CD4-positive, alpha-beta T cell (primary cell): ENCODE measurements at regions of chr19 and their contacts with region 1.

Region 1: DNA sequence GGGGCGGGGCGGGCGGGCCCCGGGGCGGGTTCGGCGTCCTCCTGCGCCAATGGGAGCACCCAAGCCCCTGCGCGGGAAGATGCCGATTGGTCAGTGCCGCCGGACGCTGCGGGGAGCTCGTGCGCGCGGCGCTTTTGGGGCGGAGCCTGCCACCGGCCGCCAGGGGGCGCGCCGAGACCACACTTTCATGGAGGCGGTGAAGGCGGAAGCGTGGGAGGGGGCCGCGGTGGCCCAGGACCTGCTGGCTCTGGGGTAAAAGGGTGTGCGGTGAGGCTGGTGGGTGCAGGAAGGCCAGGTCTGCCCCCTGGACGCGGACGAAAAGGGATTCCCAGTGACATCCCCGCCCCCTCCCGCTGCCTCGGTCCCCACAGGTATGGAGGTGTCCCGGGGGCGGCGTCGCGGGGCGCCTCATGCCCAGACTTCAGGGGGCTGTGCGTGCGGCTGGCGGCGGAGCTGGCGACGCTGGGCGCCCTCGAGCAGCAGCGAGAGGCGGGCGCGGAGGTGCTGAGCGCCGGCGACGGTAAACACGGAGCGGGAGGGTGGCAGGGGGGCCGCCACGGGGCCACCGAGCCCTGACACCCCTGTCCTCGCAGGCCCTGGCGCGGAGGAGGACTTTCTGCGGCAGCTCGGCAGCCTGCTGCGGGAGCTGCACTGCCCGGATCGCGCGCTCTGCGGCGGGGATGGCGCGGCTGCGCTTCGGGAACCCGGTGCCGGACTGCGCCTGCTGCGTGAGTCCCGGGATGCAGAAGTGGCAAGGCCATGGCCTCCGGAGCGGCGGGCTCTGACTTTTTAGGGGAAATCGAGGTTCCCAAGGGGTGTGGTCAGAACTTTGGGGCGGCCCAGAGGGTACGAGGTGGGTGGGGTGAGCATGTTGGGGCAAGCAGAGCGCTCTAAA is at the start of gene FAM98C:
- DNase-seq: peak; percentile 96 to 99 (median 98)
- ATAC-seq: peak; percentile 95
- H3K4me3 ChIP-seq: peak within 1 kb of the TSS; percentile 74
- H3K4me3 Mint-ChIP-seq: peak within 1 kb of the TSS; percentile 97
- H3K27ac ChIP-seq: peak within 1 kb of the TSS; percentile 75 to 81
- H3K27ac Mint-ChIP-seq: peak within 1 kb of the TSS; percentile 91
- H3K4me1 ChIP-seq: peaks cover 26% of the 10 kb centered on the region
- H3K4me1 Mint-ChIP-seq: peaks cover 16% of the 10 kb centered on the region
- H3K27me3 ChIP-seq: no peaks in the 10 kb centered on the region
- H3K27me3 Mint-ChIP-seq: no peaks in the 10 kb centered on the region
- CTCF ChIP-seq: peak; percentile 97
- total RNA-seq, gene FAM98C: 33.2 to 36.1 TPM

Region 2: GRCh38 chr19:38335949-38336637 is 67.1 kb before region 1 on chr19:
- CTCF ChIA-PET with region 1: interaction called, 9 read pairs
- POLR2A ChIA-PET with region 1: interaction called, 11 read pairs
- intact Hi-C with region 1: loop called (anchors 2 kb)
- DNase-seq: peak; percentile 85 to 97 (median 92)
- ATAC-seq: peak; percentile 63
- H3K4me3 ChIP-seq: peak overlapping the region; percentile 95
- H3K4me3 Mint-ChIP-seq: peak overlapping the region; percentile 93
- H3K27ac ChIP-seq: peak overlapping the region; percentile 84 to 97
- H3K27ac Mint-ChIP-seq: peak overlapping the region; percentile 96
- H3K4me1 ChIP-seq: peaks cover 27% of the 10 kb centered on the region
- H3K4me1 Mint-ChIP-seq: peaks cover 24% of the 10 kb centered on the region
- H3K27me3 ChIP-seq: no peaks in the 10 kb centered on the region
- H3K27me3 Mint-ChIP-seq: no peaks in the 10 kb centered on the region
- CTCF ChIP-seq: no peak

Region 3: GRCh38 chr19:38417544-38418506 is 14.6 kb after region 1 on chr19:
- CTCF ChIA-PET with region 1: interaction called, 5 read pairs
- POLR2A ChIA-PET with region 1: interaction called, 12 read pairs
- intact Hi-C with region 1: no loop called
- DNase-seq: peak in 13 of 14 experiments; percentile 12 to 82 (median 45)
- ATAC-seq: peak; percentile 71
- H3K4me3 ChIP-seq: peak overlapping the region; percentile 63
- H3K4me3 Mint-ChIP-seq: peak overlapping the region; percentile 83
- H3K27ac ChIP-seq: peak overlapping the region in 1 of 2 donors; percentile 34
- H3K27ac Mint-ChIP-seq: peak overlapping the region; percentile 52
- H3K4me1 ChIP-seq: peaks cover 18% of the 10 kb centered on the region
- H3K4me1 Mint-ChIP-seq: peaks cover 26% of the 10 kb centered on the region
- H3K27me3 ChIP-seq: no peaks in the 10 kb centered on the region
- H3K27me3 Mint-ChIP-seq: no peaks in the 10 kb centered on the region
- CTCF ChIP-seq: no peak

Region 4: DNA sequence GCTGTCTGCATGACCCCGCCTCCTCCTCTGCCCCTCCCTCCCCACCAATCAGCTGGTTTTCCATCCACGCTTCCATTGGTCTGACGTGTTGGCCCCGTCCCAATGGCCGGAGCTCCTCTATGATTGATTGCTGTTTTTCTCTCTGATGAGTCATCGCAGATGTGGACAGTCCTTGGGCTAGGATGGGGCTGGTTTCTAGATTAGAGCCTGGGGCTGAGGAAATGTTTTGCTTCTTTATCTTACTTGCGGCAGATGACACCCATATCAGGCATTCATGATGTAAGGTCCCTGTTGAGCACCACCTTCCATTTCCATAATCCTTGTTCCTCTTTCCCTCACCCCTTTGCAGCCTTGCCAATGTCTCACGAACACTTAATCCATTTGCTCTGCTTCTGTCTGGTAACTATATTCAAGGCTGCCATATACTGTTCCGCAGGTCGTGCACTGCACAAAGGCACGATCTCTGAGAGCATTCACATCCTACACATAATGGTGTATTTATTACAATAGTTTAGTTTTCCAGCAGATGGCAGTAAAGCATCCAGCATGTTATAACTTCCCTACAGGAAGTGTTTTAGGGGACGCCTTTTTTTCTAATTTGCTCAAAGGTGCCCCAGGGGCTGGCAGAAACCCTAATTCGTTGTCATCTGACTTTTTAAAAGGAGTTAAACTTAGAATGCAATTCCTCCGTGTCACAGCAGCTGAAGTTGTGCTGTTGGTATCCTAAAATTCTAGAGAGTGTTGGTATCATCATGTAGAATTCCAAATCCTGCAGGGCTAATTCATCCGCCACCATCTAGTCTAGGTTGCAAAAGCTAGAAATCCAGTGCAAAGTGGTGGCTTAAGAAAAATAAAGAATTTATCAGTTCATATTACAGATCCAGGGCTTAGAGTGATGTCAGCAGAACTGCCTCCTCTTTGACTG is 141.1 kb after region 1 on chr19:
- CTCF ChIA-PET with region 1: no interaction called
- POLR2A ChIA-PET with region 1: interaction called, 3 read pairs
- intact Hi-C with region 1: loop called in 1 of 2 experiments (anchors 10 kb)
- DNase-seq: peak in 5 of 14 experiments; percentile 12 to 85 (median 75)
- ATAC-seq: peak; percentile 92
- H3K4me3 ChIP-seq: no peak overlapping the region
- H3K4me3 Mint-ChIP-seq: no peak overlapping the region
- H3K27ac ChIP-seq: no peak overlapping the region
- H3K27ac Mint-ChIP-seq: peak overlapping the region; percentile 0
- H3K4me1 ChIP-seq: peaks cover 24% of the 10 kb centered on the region
- H3K4me1 Mint-ChIP-seq: peaks cover 24% of the 10 kb centered on the region
- H3K27me3 ChIP-seq: no peaks in the 10 kb centered on the region
- H3K27me3 Mint-ChIP-seq: no peaks in the 10 kb centered on the region
- CTCF ChIP-seq: peak; percentile 81

Region 5: DNA sequence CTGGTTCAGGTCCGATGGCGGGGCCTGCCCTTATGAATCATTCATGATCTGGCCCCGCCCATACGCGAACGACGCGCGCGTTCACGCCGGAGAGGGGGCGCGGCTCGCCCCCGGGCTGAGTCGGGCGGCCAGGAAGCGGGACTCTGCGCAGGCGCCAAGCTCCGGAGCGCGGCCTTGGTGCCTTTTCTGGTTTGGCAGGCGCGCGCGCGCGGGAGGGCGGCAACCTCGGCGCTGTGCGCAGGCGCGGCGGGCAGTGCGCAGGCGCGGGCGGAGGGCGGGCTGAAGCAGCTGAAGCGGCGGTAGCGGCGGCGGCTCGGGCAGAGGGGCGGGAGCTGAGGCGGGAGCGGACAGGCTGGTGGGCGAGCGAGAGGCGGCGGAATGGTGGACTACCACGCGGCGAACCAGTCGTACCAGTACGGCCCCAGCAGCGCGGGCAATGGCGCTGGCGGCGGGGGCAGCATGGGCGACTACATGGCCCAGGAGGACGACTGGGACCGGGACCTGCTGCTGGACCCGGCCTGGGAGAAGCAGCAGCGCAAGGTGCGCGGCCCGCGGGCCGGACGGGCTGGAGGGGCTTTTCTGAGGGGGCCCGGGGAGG is 244.3 kb after region 1 on chr19 and contains the start of gene ACTN4:
- CTCF ChIA-PET with region 1: interaction called, 7 read pairs
- POLR2A ChIA-PET with region 1: interaction called, 16 read pairs
- intact Hi-C with region 1: no loop called
- DNase-seq: peak; percentile 99 to 100 (median 100)
- ATAC-seq: peak; percentile 92
- H3K4me3 ChIP-seq: peak within 1 kb of the TSS; percentile 96
- H3K4me3 Mint-ChIP-seq: peak within 1 kb of the TSS; percentile 85
- H3K27ac ChIP-seq: peak within 1 kb of the TSS; percentile 21 to 41
- H3K27ac Mint-ChIP-seq: peak within 1 kb of the TSS; percentile 75
- H3K4me1 ChIP-seq: peaks cover 50% of the 10 kb centered on the region
- H3K4me1 Mint-ChIP-seq: peaks cover 37% of the 10 kb centered on the region
- H3K27me3 ChIP-seq: peaks cover 3 to 9% of the 10 kb centered on the region in 2 experiments
- H3K27me3 Mint-ChIP-seq: peaks cover 37% of the 10 kb centered on the region
- CTCF ChIP-seq: no peak
- total RNA-seq, gene ACTN4: 70.3 to 84.0 TPM

Region 6: GRCh38 chr19:38877781-38878574 is 474.8 kb after region 1 on chr19 and contains the start of gene RINL:
- CTCF ChIA-PET with region 1: interaction called, 4 read pairs
- POLR2A ChIA-PET with region 1: interaction called, 13 read pairs
- intact Hi-C with region 1: no loop called
- DNase-seq: peak; percentile 45 to 86 (median 73)
- ATAC-seq: peak; percentile 96
- H3K4me3 ChIP-seq: peak within 1 kb of the TSS; percentile 58
- H3K4me3 Mint-ChIP-seq: peak within 1 kb of the TSS; percentile 91
- H3K27ac ChIP-seq: peak within 1 kb of the TSS; percentile 90 to 96
- H3K27ac Mint-ChIP-seq: peak within 1 kb of the TSS; percentile 97
- H3K4me1 ChIP-seq: peaks cover 55% of the 10 kb centered on the region
- H3K4me1 Mint-ChIP-seq: peaks cover 38% of the 10 kb centered on the region
- H3K27me3 ChIP-seq: no peaks in the 10 kb centered on the region
- H3K27me3 Mint-ChIP-seq: no peaks in the 10 kb centered on the region
- CTCF ChIP-seq: no peak
- total RNA-seq, gene RINL: 19.5 to 21.3 TPM

Region 7: DNA sequence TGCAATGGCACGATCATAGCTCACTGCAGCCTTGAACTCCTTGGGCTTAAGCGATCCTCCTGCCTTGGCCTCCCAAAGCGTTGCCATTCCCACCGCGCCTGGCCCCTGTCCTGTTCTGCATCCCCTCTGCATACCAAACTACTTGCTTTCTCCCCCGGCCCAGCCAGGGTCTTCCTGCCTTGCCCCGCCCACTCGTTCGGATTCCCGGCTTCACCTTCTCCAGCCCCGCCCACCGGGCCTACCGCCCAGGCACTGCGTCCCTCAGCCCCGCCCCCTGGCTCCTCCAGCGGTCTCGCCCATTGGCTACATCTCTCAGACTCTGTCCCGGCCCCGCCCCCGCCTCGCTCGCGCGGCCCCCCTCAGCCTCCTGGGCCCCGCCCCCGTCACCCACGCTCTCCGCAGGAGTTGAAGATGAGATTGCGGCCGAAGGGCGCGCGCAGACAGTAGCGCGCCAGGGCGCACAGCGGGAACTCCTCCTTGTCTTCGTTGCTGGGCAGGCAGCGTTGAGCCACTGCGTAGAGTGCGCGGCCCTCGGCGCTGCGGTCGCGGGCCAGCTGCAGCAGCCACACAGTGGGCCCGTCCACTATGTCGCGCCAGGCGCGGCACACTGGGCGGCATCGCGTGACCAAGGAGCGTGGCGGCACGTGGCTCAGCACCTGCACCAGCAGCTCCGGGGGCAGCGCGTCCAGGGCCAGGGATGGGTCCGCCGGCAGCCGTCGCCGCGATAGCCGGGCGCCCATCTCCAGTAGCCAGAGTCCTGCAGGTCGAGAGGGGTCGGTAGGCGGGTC is 546.6 kb after region 1 on chr19:
- CTCF ChIA-PET with region 1: no interaction called
- POLR2A ChIA-PET with region 1: no interaction called
- intact Hi-C with region 1: loop called in 1 of 2 experiments (anchors 5 kb)
- DNase-seq: peak; percentile 60 to 90 (median 77)
- ATAC-seq: peak; percentile 94
- H3K4me3 ChIP-seq: peak overlapping the region; percentile 20
- H3K4me3 Mint-ChIP-seq: peak overlapping the region; percentile 72
- H3K27ac ChIP-seq: no peak overlapping the region
- H3K27ac Mint-ChIP-seq: no peak overlapping the region
- H3K4me1 ChIP-seq: peaks cover 18% of the 10 kb centered on the region
- H3K4me1 Mint-ChIP-seq: peaks cover 13% of the 10 kb centered on the region
- H3K27me3 ChIP-seq: peaks cover 6 to 8% of the 10 kb centered on the region in 2 experiments
- H3K27me3 Mint-ChIP-seq: peaks cover 17% of the 10 kb centered on the region
- CTCF ChIP-seq: no peak